MCF 10A (cell line): ENCODE measurements at regions of chr9 and their contacts with region 1.

Region 1: DNA sequence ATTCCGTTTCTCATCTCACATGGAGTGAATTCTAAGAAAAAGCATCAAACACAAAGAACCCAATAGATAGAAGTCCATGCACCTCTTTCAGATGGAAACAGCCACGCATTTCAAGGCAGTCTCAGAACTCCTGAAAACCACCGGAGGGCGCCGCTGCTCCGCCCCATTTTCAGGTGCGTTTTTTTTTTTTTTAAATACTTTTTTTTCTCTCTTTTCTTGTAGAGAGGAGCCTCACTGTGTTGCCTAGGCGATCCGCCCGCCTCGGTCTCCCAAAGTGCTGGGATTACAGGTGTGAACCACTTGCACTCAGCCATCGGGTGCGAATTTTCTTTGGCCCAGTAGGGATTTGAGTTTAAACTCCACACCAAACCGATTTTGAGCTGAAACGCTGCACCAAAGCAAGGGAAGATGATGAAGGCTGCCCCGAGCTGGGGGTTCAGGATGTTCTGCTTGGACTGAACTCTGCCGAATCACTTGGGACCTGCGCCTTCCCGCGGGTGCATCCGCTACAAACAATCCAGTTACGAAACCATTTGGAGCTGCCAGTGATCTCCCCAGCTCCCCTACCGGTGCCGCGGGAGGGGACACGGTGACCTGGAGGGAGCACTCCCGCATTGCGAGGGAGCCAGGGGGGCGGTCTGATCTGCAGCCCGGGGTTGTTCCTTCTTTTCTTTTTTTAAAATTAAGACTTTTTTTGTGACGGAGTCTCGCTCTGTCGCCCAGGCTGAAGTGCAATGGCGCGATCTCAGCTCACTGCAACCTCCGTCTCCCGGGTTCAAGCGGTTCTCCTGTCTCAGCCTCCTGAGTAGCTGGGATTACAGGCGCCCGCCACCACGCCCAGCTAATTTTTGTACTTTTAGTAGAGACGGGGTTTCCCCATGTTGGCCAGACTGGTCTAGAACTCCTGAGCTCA is 1.4 kb downstream of the PTGR1 start:
- DNase-seq: peak; percentile 74
- H3K4me3 Mint-ChIP-seq: peak overlapping the region; percentile 83
- H3K27ac Mint-ChIP-seq: peak overlapping the region; percentile 75
- H3K4me1 Mint-ChIP-seq: peaks cover 11% of the 10 kb centered on the region
- H3K27me3 Mint-ChIP-seq: no peaks in the 10 kb centered on the region
- CTCF ChIP-seq: peak; percentile 70

Region 2: DNA sequence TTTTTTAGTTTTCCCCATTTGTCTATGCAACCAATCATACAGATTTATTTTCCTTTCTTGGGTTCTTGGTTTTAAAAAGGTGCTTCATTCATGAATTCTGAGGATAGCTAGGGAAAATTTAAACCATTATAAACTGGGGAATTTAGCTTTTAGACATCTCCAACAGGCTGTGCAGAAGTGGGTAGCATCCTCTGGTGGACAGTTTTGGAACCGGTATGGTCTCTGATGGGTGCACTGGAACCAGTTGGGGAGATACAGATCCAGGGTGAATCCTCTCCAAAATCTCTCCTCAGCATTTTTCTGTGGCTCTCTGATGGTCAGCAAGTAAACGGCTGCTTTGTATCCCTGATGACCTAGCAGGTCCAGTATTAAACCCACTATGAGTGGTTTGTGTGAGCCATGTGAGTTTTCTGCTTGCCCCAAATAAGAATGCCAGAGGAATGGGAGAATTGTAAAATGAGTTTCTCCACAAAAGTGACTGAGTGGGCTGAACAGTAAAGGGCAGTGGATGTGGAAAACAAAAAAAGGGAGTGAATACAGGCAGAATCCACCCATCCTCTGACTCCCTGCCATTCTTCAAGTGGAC is 23.9 kb after region 1 on chr9:
- CTCF ChIA-PET with region 1: interaction called, 30 read pairs
- POLR2A ChIA-PET with region 1: interaction called, 39 read pairs
- intact Hi-C with region 1: loop called (anchors 1 kb)
- DNase-seq: peak; percentile 58
- H3K4me3 Mint-ChIP-seq: peak overlapping the region; percentile 28
- H3K27ac Mint-ChIP-seq: no peak overlapping the region
- H3K4me1 Mint-ChIP-seq: peaks cover 12% of the 10 kb centered on the region
- H3K27me3 Mint-ChIP-seq: no peaks in the 10 kb centered on the region
- CTCF ChIP-seq: peak; percentile 66

Region 3: GRCh38 chr9:111661150-111661801 is 63.2 kb after region 1 on chr9 and contains the start of gene GNG10:
- CTCF ChIA-PET with region 1: interaction called, 7 read pairs
- POLR2A ChIA-PET with region 1: interaction called, 10 read pairs
- intact Hi-C with region 1: no loop called
- DNase-seq: peak; percentile 61
- H3K4me3 Mint-ChIP-seq: peak within 1 kb of the TSS; percentile 87
- H3K27ac Mint-ChIP-seq: peak within 1 kb of the TSS; percentile 93
- H3K4me1 Mint-ChIP-seq: peaks cover 19% of the 10 kb centered on the region
- H3K27me3 Mint-ChIP-seq: no peaks in the 10 kb centered on the region
- CTCF ChIP-seq: no peak
- total RNA-seq, gene GNG10: 42.0 and 61.7 TPM in 2 replicates

Region 4: DNA sequence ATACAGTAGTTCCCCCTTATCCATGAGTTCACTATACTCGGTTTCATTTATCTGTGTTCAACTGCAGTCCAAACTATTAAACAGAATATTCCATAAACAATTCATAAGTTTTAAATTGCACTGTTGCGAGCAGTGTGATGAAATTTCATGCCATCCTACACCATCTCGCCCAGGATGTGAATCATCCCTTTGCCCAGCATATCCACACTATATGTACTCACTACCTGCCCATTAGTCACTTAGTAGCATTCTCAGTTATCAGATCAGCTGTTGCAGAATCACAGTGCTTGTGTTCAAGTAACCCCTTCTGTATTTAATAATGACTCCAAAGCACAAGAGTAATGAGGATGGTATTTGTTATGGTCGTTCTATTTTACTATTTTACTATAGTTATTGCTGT is 145.2 kb after region 1 on chr9:
- CTCF ChIA-PET with region 1: no interaction called
- POLR2A ChIA-PET with region 1: interaction called, 5 read pairs
- intact Hi-C with region 1: loop called (anchors 2 kb)
- DNase-seq: peak; percentile 94
- H3K4me3 Mint-ChIP-seq: peak overlapping the region; percentile 53
- H3K27ac Mint-ChIP-seq: peak overlapping the region; percentile 99
- H3K4me1 Mint-ChIP-seq: peaks cover 17% of the 10 kb centered on the region
- H3K27me3 Mint-ChIP-seq: no peaks in the 10 kb centered on the region
- CTCF ChIP-seq: no peak

Region 5: GRCh38 chr9:111766066-111766465 is 168.0 kb after region 1 on chr9:
- CTCF ChIA-PET with region 1: interaction called, 3 read pairs
- POLR2A ChIA-PET with region 1: no interaction called
- intact Hi-C with region 1: loop called (anchors 2 kb)
- DNase-seq: no peak
- H3K4me3 Mint-ChIP-seq: no peak overlapping the region
- H3K27ac Mint-ChIP-seq: no peak overlapping the region
- H3K4me1 Mint-ChIP-seq: no peaks in the 10 kb centered on the region
- H3K27me3 Mint-ChIP-seq: no peaks in the 10 kb centered on the region
- CTCF ChIP-seq: no peak